ENCODE measurements at regions of chr17 and their contacts with region 1.

Region 1: DNA sequence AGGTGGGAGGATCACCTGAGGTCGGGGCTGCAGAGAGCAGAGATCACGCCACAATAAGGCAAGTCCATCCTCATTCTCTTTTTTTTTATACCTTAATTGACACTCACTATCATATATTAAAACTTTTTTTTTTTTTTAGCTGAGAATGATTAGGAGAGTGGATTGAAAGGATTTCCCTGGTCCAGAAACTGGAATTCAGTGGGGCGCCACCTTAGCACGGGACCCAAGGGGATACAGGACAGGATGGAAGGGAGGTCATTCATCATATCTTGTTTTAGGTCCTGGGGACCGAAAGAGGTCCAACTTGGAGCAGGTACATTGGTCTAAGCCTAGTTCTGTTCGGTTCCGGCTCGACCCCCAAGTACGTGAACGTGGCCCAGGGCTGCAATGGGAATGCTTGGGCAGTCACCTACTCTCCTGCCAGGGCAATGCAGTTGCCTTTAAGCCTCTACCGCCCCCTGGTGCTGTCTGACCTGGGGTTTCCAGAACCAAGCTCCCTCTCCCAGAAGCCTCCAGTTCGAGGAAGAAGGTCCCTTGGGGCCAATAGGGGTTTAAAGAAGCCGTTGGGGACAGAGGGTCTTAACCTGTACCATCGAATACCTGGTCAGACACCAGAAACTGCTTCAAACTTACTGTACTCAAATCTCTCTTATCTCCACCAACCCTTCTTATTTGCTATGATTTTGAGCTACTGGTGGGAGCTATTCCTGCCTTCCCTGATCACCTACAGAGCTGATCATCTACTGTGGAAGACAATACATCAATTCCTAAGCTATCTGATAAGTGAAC is 19.9 kb upstream of the GPATCH8 start:
- DNase-seq: peak; percentile 61
- ATAC-seq: peak; percentile 91
- H3K4me3 ChIP-seq: no peak overlapping the region
- H3K27ac ChIP-seq: no peak overlapping the region
- H3K4me1 ChIP-seq: peaks cover under 1% of the 10 kb centered on the region
- H3K27me3 ChIP-seq: no peaks in the 10 kb centered on the region
- CTCF ChIP-seq: peak; percentile 76
- POLR2A ChIP-seq: no peak
- RAD21 ChIP-seq: peak; percentile 80

Region 2: DNA sequence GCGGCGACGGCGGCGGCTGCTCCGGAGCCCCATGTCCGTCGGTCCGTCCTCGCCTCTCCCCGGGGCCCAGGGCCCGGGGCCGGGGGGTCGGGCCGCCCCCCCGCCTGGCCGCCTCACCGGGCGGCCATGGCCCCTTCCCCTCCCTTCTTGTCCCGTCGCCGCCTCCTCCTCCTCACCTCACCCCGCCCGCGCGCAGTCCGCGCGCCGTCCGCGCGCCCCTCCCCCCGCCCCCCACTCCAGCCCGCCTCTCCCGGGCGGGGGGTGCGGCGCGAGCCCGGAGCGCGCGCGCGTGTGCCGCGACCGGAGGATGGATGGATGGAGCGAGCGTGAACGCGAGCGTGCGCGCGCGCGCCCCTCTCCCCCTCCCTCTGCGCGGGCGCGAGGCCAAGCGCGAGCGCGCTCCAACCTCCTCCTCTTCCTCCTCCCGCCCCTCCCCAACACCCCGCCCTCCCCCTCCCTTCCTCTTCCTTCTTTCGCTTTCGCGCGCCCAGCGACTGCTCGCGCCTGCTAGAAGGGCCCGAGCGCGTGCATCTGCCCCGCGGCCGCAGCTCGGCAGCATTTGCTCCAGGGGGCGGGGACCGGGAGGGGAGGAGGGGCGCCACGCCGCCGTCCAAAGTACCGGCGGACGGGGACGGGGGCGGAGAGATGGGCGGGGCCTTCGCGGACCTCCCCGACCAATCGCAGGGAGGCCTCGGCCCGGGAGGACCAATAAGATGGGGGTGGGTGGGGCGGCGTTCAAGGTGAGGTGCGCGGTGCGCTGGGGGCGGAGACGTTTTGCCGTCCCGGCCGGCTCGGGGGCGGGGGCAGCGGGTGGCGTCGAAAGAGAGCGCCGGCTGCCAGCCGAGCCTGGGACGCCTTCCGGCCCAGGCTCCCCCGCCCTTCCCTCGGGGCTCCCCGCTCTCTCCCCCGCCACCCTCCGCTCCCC is 323.3 kb before region 1 on chr17 and contains the start of gene ATXN7L3:
- CTCF ChIA-PET with region 1: no interaction called
- POLR2A ChIA-PET with region 1: no interaction called
- dilution Hi-C with region 1: no loop called
- in situ Hi-C with region 1: loop called (anchors 25 kb)
- intact Hi-C with region 1: loop called (anchors 5 kb)
- DNase-seq: peak; percentile 97
- ATAC-seq: peak; percentile 84
- H3K4me3 ChIP-seq: peak within 1 kb of the TSS; percentile 85
- H3K27ac ChIP-seq: peak within 1 kb of the TSS; percentile 98
- H3K4me1 ChIP-seq: peaks cover 22% of the 10 kb centered on the region
- H3K27me3 ChIP-seq: no peaks in the 10 kb centered on the region
- CTCF ChIP-seq: no peak
- POLR2A ChIP-seq: peak; percentile 79
- RAD21 ChIP-seq: no peak
- total RNA-seq, gene ATXN7L3: 17.2 and 17.5 TPM in 2 replicates

Region 3: DNA sequence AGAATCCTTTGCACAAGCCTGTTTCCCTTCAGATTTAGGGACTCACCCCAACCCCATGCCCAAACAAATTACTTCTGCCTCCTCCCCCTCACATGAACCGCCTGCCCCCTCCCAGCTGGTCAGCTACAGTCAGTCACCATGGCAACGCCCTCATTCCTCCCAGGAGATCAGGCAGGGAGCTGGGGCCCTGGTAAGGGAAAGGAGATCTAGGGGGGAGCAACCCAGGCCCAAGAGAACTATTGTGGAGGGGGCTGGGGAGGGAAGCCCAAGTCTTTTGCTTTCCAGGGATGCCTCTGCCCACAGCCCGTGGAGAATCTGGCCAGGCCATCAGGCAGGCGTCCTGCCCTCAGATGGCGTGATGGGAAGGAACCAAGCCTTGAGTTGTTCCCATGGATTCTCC is 162.3 kb before region 1 on chr17:
- CTCF ChIA-PET with region 1: no interaction called
- POLR2A ChIA-PET with region 1: no interaction called
- dilution Hi-C with region 1: no loop called
- in situ Hi-C with region 1: no loop called
- intact Hi-C with region 1: loop called (anchors 1 kb)
- DNase-seq: peak; percentile 68
- ATAC-seq: peak; percentile 33; the same call in 1 of the 2 replicates
- H3K4me3 ChIP-seq: no peak overlapping the region
- H3K27ac ChIP-seq: no peak overlapping the region
- H3K4me1 ChIP-seq: peaks cover 15% of the 10 kb centered on the region
- H3K27me3 ChIP-seq: peaks cover 5% of the 10 kb centered on the region
- CTCF ChIP-seq: no peak
- POLR2A ChIP-seq: no peak
- RAD21 ChIP-seq: no peak

Region 4: GRCh38 chr17:44400226-44400847 is 122.7 kb before region 1 on chr17:
- CTCF ChIA-PET with region 1: interaction called, 4 read pairs
- POLR2A ChIA-PET with region 1: no interaction called
- dilution Hi-C with region 1: no loop called
- in situ Hi-C with region 1: no loop called
- intact Hi-C with region 1: loop called (anchors 1 kb)
- DNase-seq: peak; percentile 41
- ATAC-seq: peak; percentile 89
- H3K4me3 ChIP-seq: no peak overlapping the region
- H3K27ac ChIP-seq: no peak overlapping the region
- H3K4me1 ChIP-seq: no peaks in the 10 kb centered on the region
- H3K27me3 ChIP-seq: no peaks in the 10 kb centered on the region
- CTCF ChIP-seq: peak; percentile 66
- POLR2A ChIP-seq: no peak
- RAD21 ChIP-seq: peak; percentile 65

Region 5: GRCh38 chr17:44533533-44534246 is 10.6 kb after region 1 on chr17:
- CTCF ChIA-PET with region 1: interaction called, 11 read pairs
- POLR2A ChIA-PET with region 1: no interaction called
- dilution Hi-C with region 1: no loop called
- in situ Hi-C with region 1: no loop called
- intact Hi-C with region 1: no loop called
- DNase-seq: peak; percentile 90
- ATAC-seq: peak; percentile 83
- H3K4me3 ChIP-seq: peak overlapping the region; percentile 2; the same call in 1 of the 2 replicates
- H3K27ac ChIP-seq: peak overlapping the region; percentile 61
- H3K4me1 ChIP-seq: peaks cover 12% of the 10 kb centered on the region
- H3K27me3 ChIP-seq: no peaks in the 10 kb centered on the region
- CTCF ChIP-seq: peak; percentile 98
- POLR2A ChIP-seq: peak; percentile 60; the same call in 1 of the 2 replicates
- RAD21 ChIP-seq: peak; percentile 99